Caco-2 (cell line): ENCODE measurements at regions of chr5 and their contacts with region 1.

Region 1: DNA sequence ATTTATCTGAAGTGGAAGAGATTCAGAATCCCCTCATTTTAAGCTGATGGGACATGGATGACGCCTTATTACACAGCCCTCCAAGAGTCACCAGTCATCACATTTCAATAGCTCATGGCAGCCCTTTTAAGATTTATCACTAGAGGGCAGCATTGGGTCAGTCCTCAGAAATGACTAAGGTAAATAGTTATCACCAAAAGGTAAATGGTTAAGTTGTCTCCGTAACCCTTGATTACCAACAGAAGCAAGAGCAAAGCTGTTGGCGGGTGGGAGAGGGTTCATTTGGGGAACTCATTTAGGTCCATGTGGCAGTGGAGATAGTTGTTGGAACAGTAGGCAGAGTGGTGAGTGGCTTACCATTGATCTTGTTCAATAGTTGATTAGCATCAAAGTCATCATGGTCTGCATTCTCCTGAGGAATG is 12.0 kb upstream of the C9 start:
- DNase-seq: peak; percentile 51 to 76
- H3K4me3 ChIP-seq: no peak overlapping the region
- H3K4me3 Mint-ChIP-seq: no peak overlapping the region
- H3K27ac Mint-ChIP-seq: no peak overlapping the region
- H3K4me1 ChIP-seq: peaks cover 18% of the 10 kb centered on the region
- H3K4me1 Mint-ChIP-seq: peaks cover 13% of the 10 kb centered on the region
- H3K27me3 ChIP-seq: no peaks in the 10 kb centered on the region
- H3K27me3 Mint-ChIP-seq: no peaks in the 10 kb centered on the region
- CTCF ChIP-seq: peak; percentile 70 to 79

Region 2: GRCh38 chr5:39547553-39548154 is 171.3 kb after region 1 on chr5:
- CTCF ChIA-PET with region 1: interaction called, 67 read pairs
- POLR2A ChIA-PET with region 1: interaction called, 3 read pairs
- intact Hi-C with region 1: loop called (anchors 1 kb)
- DNase-seq: peak in 1 of 2 experiments; percentile 65
- H3K4me3 ChIP-seq: no peak overlapping the region
- H3K4me3 Mint-ChIP-seq: no peak overlapping the region
- H3K27ac Mint-ChIP-seq: no peak overlapping the region
- H3K4me1 ChIP-seq: peaks cover 12% of the 10 kb centered on the region
- H3K4me1 Mint-ChIP-seq: no peaks in the 10 kb centered on the region
- H3K27me3 ChIP-seq: no peaks in the 10 kb centered on the region
- H3K27me3 Mint-ChIP-seq: no peaks in the 10 kb centered on the region
- CTCF ChIP-seq: peak; percentile 58 to 82

Region 3: DNA sequence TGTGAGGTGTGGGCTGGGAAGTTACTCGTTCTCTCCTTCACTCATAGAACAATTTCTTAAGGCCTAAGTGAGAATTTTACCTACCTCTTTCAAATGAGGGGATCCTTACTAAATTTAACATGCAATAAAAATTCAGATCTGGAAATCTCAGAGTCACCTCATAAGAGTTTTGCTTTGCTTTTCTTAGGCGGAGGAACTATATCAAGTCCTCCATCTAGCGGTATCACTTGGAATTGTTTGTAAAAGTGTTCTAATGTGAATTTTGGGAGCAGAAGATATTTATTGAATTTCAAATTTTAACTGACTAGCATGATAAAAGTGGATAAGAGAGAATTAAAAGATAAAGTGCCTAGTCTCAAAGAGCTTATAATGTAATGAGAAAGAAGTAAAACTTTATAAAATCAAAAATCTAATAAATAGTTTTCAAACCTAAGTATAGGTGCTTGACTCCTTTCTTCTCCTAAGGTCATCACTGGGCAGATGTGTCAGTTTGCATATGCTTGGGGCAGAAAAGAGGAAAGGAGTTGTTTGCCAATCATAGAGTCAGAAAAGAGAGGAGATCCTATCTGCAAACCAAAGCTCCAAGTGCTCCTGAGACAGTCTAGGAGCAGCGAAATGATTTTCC is 194.2 kb after region 1 on chr5:
- CTCF ChIA-PET with region 1: interaction called, 8 read pairs
- POLR2A ChIA-PET with region 1: no interaction called
- intact Hi-C with region 1: loop called (anchors 1 kb)
- DNase-seq: peak in 1 of 2 experiments; percentile 34
- H3K4me3 ChIP-seq: no peak overlapping the region
- H3K4me3 Mint-ChIP-seq: no peak overlapping the region
- H3K27ac Mint-ChIP-seq: no peak overlapping the region
- H3K4me1 ChIP-seq: peaks cover 11% of the 10 kb centered on the region; the same call in 1 of the 2 replicates
- H3K4me1 Mint-ChIP-seq: no peaks in the 10 kb centered on the region
- H3K27me3 ChIP-seq: no peaks in the 10 kb centered on the region
- H3K27me3 Mint-ChIP-seq: no peaks in the 10 kb centered on the region
- CTCF ChIP-seq: peak; percentile 69 to 70